Posterior vena cava (tissue), 2 donors: ENCODE measurements at regions of chr15 and their contacts with region 1.

Region 1: DNA sequence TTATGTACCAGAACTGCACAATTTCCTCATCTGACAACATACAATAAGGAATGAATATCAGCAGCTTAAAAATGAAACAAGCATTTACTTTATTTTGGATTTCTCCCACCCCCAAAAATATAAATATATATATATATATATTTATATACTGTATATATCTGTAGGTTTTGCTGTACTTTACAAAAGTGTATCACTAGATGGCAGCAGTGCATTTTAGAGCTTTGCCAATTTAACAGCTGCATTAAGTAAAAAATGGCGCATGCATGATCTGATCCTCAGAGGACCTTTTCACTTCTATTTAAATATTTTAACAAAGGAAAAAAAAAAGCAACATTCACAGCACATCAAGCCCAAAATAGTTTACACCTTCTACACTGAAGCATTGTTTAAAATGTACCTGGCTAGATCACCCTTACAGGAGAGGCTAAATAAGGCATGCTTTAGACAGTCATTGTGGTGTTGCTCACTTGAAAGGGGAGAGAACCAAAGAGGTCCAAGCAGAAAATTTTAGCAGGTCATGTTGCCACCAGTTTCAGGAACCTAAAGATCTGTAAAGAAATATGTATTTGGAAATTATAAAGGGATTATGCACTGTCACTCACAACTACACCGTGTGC is 72.6 kb downstream of the NPTN start:
- DNase-seq: no peak

Region 2: DNA sequence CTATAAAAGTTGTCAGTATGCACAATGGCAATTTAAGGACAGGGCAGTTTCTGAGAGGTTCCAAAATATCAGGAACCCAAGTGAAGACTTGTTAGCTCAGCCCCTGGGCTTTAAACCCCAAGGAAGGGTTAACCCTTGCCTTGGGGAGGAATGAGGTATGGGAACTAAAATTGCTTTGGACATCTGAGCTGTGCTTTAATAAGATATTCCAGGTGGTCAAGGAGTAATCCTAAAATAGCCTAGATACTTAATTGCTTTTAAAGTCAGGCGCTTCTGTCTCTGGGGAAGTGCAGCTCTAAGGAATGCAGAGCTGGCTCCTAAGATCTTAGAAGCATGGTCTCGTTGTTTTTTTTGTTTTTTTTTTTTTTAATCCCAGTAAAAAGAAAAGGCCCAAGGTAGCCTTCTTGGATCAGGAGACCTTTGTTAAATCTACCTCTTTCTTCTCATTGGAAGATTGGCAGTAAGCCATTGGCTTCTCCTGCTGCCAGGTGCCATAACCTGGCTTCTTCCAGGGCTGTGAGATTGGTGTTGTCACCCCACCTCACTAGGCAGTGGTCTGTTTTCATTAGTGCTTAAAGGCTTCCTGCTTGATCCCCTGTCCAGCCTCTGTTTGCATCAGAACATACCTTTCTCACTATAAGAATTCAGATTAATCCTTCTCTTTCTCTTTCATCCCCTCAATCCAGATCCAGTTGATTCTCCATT is 1004.9 kb after region 1 on chr15:
- intact Hi-C with region 1: loop called in 1 of 2 experiments (anchors 10 kb)
- DNase-seq: no peak